Panc1 (cell line): ENCODE measurements at regions of chr3 and their contacts with region 1.

Region 1: GRCh38 chr3:146577662-146578061 is 27.5 kb downstream of the PLSCR5 start:
- DNase-seq: no peak
- ATAC-seq: peak; percentile 85
- H3K4me3 ChIP-seq: no peak overlapping the region
- H3K27ac ChIP-seq: peak overlapping the region; percentile 69; the same call in 1 of the 2 replicates
- H3K4me1 ChIP-seq: no peaks in the 10 kb centered on the region
- H3K27me3 ChIP-seq: no peaks in the 10 kb centered on the region
- CTCF ChIP-seq: peak; percentile 31; the same call in 1 of the 2 replicates

Region 2: GRCh38 chr3:146218880-146219866 is 358.5 kb before region 1 on chr3:
- CTCF ChIA-PET with region 1: interaction called, 4 read pairs
- POLR2A ChIA-PET with region 1: interaction called, 3 read pairs
- in situ Hi-C with region 1: no loop called
- intact Hi-C with region 1: loop called (anchors 1 kb)
- DNase-seq: no peak
- ATAC-seq: no peak
- H3K4me3 ChIP-seq: no peak overlapping the region
- H3K27ac ChIP-seq: no peak overlapping the region
- H3K4me1 ChIP-seq: peaks cover 8% of the 10 kb centered on the region; the same call in 1 of the 2 replicates
- H3K27me3 ChIP-seq: no peaks in the 10 kb centered on the region
- CTCF ChIP-seq: peak; percentile 73; the same call in 1 of the 2 replicates

Region 3: GRCh38 chr3:146314871-146315270 is 262.8 kb before region 1 on chr3:
- CTCF ChIA-PET with region 1: no interaction called
- POLR2A ChIA-PET with region 1: no interaction called
- in situ Hi-C with region 1: no loop called
- intact Hi-C with region 1: no loop called
- DNase-seq: no peak
- ATAC-seq: no peak
- H3K4me3 ChIP-seq: no peak overlapping the region
- H3K27ac ChIP-seq: no peak overlapping the region
- H3K4me1 ChIP-seq: no peaks in the 10 kb centered on the region
- H3K27me3 ChIP-seq: no peaks in the 10 kb centered on the region
- CTCF ChIP-seq: no peak

Region 4: GRCh38 chr3:146326670-146327543 is 250.8 kb before region 1 on chr3:
- CTCF ChIA-PET with region 1: interaction called, 3 read pairs
- POLR2A ChIA-PET with region 1: no interaction called
- in situ Hi-C with region 1: no loop called
- intact Hi-C with region 1: loop called (anchors 5 kb)
- DNase-seq: peak; percentile 25
- ATAC-seq: peak; percentile 91
- H3K4me3 ChIP-seq: no peak overlapping the region
- H3K27ac ChIP-seq: no peak overlapping the region
- H3K4me1 ChIP-seq: no peaks in the 10 kb centered on the region
- H3K27me3 ChIP-seq: no peaks in the 10 kb centered on the region
- CTCF ChIP-seq: peak; percentile 71

Region 5: DNA sequence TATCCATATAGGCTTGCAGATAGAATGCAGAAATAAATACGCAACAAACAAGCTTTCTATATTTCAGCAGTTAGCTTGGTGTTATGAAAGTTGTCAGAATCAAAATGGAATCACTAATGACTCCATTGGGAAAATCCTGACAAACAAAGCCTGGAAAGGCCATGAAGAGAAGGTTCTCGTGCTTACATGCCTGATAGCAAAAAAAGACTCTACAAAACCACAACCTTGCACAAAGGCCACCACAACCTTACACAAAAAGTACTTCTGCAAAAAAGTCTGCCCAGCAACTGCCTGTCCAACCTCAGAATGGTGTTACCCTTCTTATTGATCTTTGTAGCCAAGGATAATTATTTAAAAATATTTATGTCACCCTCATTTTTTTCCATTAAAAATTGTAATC is 18.9 kb before region 1 on chr3:
- CTCF ChIA-PET with region 1: no interaction called
- POLR2A ChIA-PET with region 1: interaction called, 19 read pairs
- in situ Hi-C with region 1: no loop called
- intact Hi-C with region 1: no loop called
- DNase-seq: no peak
- ATAC-seq: no peak
- H3K4me3 ChIP-seq: no peak overlapping the region
- H3K27ac ChIP-seq: no peak overlapping the region
- H3K4me1 ChIP-seq: no peaks in the 10 kb centered on the region
- H3K27me3 ChIP-seq: no peaks in the 10 kb centered on the region
- CTCF ChIP-seq: no peak

Region 6: DNA sequence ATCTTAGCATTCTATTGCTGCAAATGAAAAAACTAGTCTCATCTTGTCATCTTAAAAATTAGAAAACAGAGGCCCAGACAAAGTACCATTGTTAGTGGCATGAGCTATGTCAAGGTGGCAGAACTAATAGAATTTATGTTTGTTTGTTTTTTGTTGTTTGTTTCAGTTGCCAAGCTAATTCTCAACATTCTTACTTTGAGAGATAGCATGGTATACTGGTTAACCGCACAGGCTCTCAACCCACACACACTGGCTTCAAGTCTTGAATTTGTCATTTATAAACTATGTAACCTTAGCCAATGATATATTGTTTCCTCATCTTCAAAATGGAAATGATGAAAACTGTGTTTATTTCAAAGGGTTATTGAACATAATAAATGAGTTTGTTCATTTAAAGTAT is 395.1 kb after region 1 on chr3:
- CTCF ChIA-PET with region 1: no interaction called
- POLR2A ChIA-PET with region 1: no interaction called
- in situ Hi-C with region 1: no loop called
- intact Hi-C with region 1: no loop called
- DNase-seq: no peak
- ATAC-seq: no peak
- H3K4me3 ChIP-seq: no peak overlapping the region
- H3K27ac ChIP-seq: no peak overlapping the region
- H3K4me1 ChIP-seq: no peaks in the 10 kb centered on the region
- H3K27me3 ChIP-seq: no peaks in the 10 kb centered on the region
- CTCF ChIP-seq: no peak

Region 7: GRCh38 chr3:147521646-147522045 is 944.0 kb after region 1 on chr3:
- CTCF ChIA-PET with region 1: no interaction called
- POLR2A ChIA-PET with region 1: no interaction called
- in situ Hi-C with region 1: no loop called
- intact Hi-C with region 1: no loop called
- DNase-seq: no peak
- ATAC-seq: no peak
- H3K4me3 ChIP-seq: no peak overlapping the region
- H3K27ac ChIP-seq: no peak overlapping the region
- H3K4me1 ChIP-seq: no peaks in the 10 kb centered on the region
- H3K27me3 ChIP-seq: no peaks in the 10 kb centered on the region
- CTCF ChIP-seq: no peak